ENCODE measurements at regions of chr17 and their contacts with region 1.

Region 1: DNA sequence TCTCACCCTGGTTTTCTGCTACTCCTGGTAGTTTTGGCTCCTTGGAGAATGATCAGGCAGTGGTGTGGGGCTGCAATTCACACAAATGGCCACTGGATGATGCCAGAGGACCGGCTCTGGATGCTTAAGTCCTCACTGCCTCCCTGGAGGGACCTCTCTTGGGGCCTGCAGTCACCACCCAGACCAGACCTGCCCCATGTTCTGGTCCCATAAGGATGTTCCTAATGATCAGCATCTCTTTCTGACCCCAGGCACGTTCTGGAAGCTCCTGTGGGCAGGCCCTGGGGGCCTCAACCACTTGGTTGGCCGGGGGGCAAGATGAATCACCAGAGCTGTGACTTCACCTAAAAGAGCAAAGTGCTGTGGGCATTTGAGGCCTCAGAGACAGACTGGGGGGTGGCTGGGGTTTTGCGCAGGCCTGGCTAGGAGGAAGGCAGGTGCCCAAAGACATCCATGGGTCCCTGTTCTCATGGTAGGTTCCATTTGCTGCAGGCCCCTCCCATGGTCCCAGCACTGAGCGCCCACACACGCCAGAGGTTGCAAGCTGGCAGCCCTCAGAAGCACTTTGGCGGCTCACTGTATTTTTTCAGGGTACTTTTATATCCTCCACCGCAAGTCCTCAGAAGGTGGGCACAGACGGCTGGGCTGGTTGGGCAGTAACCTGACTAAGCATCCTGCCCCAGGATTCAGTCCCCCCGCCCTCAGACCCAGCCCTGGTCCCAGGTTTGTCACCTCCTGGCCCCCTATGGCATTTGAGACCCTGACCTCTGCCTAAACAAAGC is 53.2 kb downstream of the NT5M start:
- DNase-seq: peak; percentile 73
- H3K4me3 ChIP-seq: no peak overlapping the region
- H3K27ac ChIP-seq: no peak overlapping the region
- H3K4me1 ChIP-seq: peaks cover 19% of the 10 kb centered on the region
- H3K27me3 ChIP-seq: no peaks in the 10 kb centered on the region
- CTCF ChIP-seq: peak; percentile 99

Region 2: DNA sequence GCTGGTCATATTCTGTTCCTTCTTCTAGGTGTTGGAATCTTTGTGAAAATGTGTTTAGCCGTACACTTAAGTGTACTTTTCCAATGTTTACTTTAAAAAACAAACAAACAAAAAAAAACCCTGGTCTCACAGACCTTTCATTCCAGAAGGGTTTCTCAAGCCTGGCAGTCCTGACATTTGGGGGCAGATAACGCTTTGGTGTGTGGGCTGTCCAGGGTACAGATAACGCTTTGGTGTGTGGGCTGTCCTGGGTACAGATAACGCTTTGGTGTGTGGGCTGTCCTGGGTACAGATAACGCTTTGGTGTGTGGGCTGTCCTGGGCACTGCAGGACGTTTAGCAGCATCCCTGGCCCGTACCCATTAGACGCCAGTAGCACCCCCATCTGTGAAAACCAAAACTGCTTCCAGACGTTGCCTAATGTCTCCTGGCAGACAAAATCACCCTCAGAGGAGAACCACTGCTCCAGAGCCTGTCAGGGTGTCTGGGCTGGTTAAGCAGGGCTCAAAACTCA is 104.1 kb before region 1 on chr17:
- intact Hi-C with region 1: no loop called
- DNase-seq: no peak
- H3K4me3 ChIP-seq: no peak overlapping the region
- H3K27ac ChIP-seq: no peak overlapping the region
- H3K4me1 ChIP-seq: no peaks in the 10 kb centered on the region
- H3K27me3 ChIP-seq: no peaks in the 10 kb centered on the region
- CTCF ChIP-seq: no peak

Region 3: GRCh38 chr17:17496189-17497064 is 140.1 kb after region 1 on chr17 and contains the start of gene RASD1:
- intact Hi-C with region 1: loop called (anchors 10 kb)
- DNase-seq: peak; percentile 93
- H3K4me3 ChIP-seq: peak within 1 kb of the TSS; percentile 86
- H3K27ac ChIP-seq: peak within 1 kb of the TSS; percentile 98
- H3K4me1 ChIP-seq: peaks cover 55% of the 10 kb centered on the region
- H3K27me3 ChIP-seq: no peaks in the 10 kb centered on the region
- CTCF ChIP-seq: peak; percentile 98
- total RNA-seq, gene RASD1: 25.4 TPM

Region 4: DNA sequence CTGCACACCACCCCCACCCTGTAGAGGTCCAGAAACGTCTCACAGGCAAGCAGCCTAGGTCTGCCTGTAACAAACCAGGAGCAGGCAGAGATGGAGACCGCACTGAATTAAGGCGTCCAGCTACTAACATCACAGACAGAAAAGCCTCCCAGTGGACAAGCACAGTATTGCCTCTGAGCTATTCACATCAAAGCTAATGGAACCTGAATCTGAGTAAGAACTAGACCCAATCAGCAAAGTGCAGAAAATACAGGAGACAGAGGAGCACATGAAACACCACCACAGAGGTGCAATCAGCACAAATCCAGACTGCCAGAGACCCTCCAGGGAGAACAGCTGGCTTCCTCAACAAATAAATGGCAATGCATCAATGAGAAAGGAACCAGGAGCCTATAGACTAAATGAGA is 257.4 kb after region 1 on chr17:
- intact Hi-C with region 1: loop called (anchors 10 kb)
- DNase-seq: no peak
- H3K4me3 ChIP-seq: no peak overlapping the region
- H3K27ac ChIP-seq: no peak overlapping the region
- H3K4me1 ChIP-seq: peaks cover 10% of the 10 kb centered on the region
- H3K27me3 ChIP-seq: no peaks in the 10 kb centered on the region
- CTCF ChIP-seq: peak; percentile 83

Region 5: DNA sequence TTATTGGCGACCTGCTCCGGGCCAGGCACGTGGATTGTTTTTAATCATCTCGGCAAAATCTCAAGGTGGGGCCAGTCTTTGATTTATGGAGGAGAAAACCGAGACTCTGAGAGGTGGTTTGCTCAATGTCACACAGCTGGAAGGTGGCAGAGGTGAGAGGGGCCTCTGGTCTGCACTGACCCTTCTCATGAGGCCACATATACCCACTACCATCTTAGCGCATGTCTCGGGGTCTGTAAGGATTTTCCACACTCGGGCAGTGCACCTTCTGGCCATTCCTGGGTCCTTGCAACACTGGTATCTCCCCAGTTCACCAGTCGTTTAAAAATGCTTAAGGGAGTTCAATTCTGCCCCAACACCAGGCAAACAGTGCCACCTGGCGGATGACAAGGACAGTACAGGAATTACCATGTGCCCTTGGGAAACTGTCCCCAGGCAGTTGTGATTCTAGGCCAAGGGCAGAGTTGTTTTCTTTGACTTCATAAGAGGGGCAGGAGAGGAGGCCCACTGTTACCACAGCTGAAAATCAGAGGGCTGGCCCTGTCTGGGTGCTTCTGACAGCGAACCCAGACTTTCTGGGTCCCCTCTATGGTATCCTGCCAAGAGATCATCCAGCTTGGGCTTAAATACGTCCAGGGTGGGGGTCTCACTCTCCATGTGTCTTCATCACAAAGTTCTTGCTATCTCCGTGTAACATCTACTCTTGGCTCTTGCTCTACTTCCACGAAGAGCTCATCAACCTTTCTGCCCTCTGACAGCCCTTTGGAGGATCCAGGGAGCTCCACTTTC is 285.5 kb after region 1 on chr17:
- intact Hi-C with region 1: loop called (anchors 10 kb)
- DNase-seq: peak; percentile 69
- H3K4me3 ChIP-seq: no peak overlapping the region
- H3K27ac ChIP-seq: no peak overlapping the region
- H3K4me1 ChIP-seq: peaks cover 2% of the 10 kb centered on the region
- H3K27me3 ChIP-seq: no peaks in the 10 kb centered on the region
- CTCF ChIP-seq: peak; percentile 92

Measured in left ventricle myocardium inferior (tissue), 1 donor.